K562 (cell line): ENCODE measurements at regions of chr13 and their contacts with region 1.

Region 1: DNA sequence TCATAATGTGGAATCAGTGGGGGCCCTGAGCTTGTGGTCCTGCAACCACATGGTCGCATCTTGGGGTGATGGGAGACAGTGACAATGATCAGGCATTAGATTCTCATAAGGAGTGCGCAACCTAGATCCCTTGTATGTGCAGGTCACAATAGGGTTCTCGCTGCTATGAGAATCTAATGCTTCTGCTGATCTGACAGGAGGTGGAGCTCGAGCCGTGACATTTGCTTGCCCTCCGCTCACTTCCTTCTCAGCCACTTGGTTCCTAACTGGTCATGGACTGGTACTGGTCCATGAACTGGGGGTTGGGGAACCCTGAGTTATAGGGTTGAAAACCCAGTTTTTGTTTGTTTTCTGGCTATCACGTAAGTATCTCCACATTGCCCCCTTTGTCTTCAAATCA is 1290.9 kb upstream of the ATXN8OS start:
- DNase-seq: peak in 1 of 4 experiments; percentile 12
- ATAC-seq: no peak
- H3K4me3 ChIP-seq: no peak overlapping the region
- H3K27ac ChIP-seq: no peak overlapping the region
- H3K4me1 ChIP-seq: no peaks in the 10 kb centered on the region; a peak in 1 of 5 replicates
- H3K27me3 ChIP-seq: no peaks in the 10 kb centered on the region
- CTCF ChIP-seq: no peak
- EP300 ChIP-seq: no peak
- POLR2A ChIP-seq: no peak
- RAD21 ChIP-seq: no peak

Region 2: DNA sequence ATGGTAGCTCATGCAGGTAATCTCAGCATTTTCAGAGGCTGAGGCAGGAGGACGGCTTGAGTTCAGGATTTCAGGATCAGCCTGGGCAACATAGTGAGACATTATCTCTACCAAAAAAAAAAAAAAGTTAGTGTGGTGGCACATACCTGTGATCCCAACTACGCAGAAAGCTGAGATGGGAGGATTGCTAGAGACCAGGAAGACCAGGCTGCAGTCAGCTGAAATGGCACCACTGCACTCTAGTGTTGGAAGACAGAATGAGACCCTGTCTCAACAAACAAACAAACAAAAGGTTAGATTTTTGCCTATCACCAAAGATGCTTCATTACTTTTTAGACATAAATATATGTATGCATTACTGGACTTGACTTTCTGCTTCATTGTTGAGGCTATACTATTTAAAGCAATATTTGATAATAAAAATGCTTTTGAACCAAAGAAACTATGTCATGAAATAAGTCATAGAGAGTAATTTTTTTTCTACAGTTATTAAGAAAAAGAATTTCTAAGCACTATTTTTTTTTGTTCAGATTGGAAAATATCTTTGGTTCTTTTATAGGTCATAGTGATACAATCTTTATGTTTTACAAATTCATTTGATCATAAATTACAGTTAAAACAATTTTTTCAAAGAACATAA is 110.8 kb after region 1 on chr13:
- CTCF ChIA-PET with region 1: no interaction called
- POLR2A ChIA-PET with region 1: no interaction called
- in situ Hi-C with region 1: no loop called
- intact Hi-C with region 1: loop called (anchors 5 kb)
- DNase-seq: peak in 1 of 4 experiments; percentile 31
- ATAC-seq: no peak
- H3K4me3 ChIP-seq: no peak overlapping the region
- H3K27ac ChIP-seq: no peak overlapping the region
- H3K4me1 ChIP-seq: no peaks in the 10 kb centered on the region
- H3K27me3 ChIP-seq: no peaks in the 10 kb centered on the region
- CTCF ChIP-seq: peak in 1 of 3 experiments; percentile 9; a peak in 1 of 6 replicates
- EP300 ChIP-seq: no peak
- POLR2A ChIP-seq: no peak
- RAD21 ChIP-seq: peak; percentile 16 to 48; a peak in 2 of 4 replicates

Region 3: GRCh38 chr13:68976287-68976686 is 159.6 kb after region 1 on chr13:
- CTCF ChIA-PET with region 1: no interaction called
- POLR2A ChIA-PET with region 1: no interaction called
- in situ Hi-C with region 1: no loop called
- intact Hi-C with region 1: no loop called
- DNase-seq: no peak
- ATAC-seq: no peak
- H3K4me3 ChIP-seq: no peak overlapping the region
- H3K27ac ChIP-seq: no peak overlapping the region
- H3K4me1 ChIP-seq: no peaks in the 10 kb centered on the region
- H3K27me3 ChIP-seq: no peaks in the 10 kb centered on the region
- CTCF ChIP-seq: no peak
- EP300 ChIP-seq: no peak
- POLR2A ChIP-seq: no peak
- RAD21 ChIP-seq: no peak

Region 4: GRCh38 chr13:68988176-68988575 is 171.5 kb after region 1 on chr13:
- CTCF ChIA-PET with region 1: no interaction called
- POLR2A ChIA-PET with region 1: no interaction called
- in situ Hi-C with region 1: no loop called
- intact Hi-C with region 1: no loop called
- DNase-seq: no peak
- ATAC-seq: no peak
- H3K4me3 ChIP-seq: no peak overlapping the region
- H3K27ac ChIP-seq: no peak overlapping the region
- H3K4me1 ChIP-seq: peaks cover 0 to 5% of the 10 kb centered on the region in 2 experiments; a peak in 1 of 5 replicates
- H3K27me3 ChIP-seq: no peaks in the 10 kb centered on the region
- CTCF ChIP-seq: no peak
- EP300 ChIP-seq: no peak
- POLR2A ChIP-seq: no peak
- RAD21 ChIP-seq: no peak